ENCODE measurements at regions of chr3 and their contacts with region 1.

Region 1: GRCh38 chr3:186783073-186783730 is at the start of gene EIF4A2:
- DNase-seq: peak; percentile 72 to 91 (median 87)
- H3K4me3 ChIP-seq: peak within 1 kb of the TSS; percentile 61 to 100 (median 95)
- H3K27ac ChIP-seq: peak within 1 kb of the TSS; percentile 94 to 100 (median 100)
- H3K27me3 ChIP-seq: no peaks in the 10 kb centered on the region
- CTCF ChIP-seq: peak in 21 of 56 donors; percentile 2 to 49 (median 22)
- total RNA-seq, gene EIF4A2: 281 to 995 (median 685) TPM

Region 2: DNA sequence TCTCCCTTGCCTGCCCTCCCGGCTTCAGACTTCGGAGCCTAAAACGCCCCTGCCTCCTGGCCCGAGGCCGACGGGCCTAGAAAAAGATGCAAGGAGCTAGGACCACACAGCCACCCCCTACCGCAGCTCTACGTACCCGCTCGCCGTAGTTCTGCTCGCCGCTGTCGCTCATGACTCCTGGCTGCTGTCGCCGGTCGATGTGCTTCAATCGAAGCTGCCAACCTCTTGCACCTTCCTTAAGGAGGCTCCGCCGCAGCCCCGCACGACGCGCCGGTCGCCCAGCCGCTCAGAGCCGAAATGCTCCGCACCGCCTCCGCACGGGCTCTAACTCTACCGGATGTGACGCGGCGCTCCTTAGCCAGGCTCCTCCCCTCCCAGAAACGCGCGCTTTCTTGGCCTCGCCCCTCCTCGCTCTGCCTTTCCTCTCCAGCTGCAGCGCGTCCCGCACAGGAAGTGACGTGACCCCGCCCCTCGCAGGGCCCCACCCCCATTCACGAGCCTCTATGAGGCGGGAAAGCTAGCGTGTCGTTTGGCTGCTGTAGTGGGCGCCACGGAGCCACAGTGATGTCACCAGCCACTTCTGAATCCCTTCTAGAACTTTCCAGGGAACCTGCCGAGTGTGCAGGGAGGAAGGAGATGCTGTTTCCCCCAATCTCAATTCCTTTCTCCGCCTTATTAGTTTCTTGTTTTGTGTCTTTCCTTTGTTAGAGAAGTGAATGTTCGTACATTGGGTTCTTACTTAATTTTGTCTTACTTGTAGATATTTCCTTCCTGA is 845.3 kb before region 1 on chr3 and contains the start of gene TRA2B:
- intact Hi-C with region 1: loop called in 1 of 2 experiments (anchors 10 kb)
- DNase-seq: peak; percentile 98 to 100 (median 99)
- H3K4me3 ChIP-seq: peak within 1 kb of the TSS; percentile 43 to 100 (median 97)
- H3K27ac ChIP-seq: peak within 1 kb of the TSS; percentile 86 to 100 (median 99)
- H3K27me3 ChIP-seq: no peaks in the 10 kb centered on the region
- CTCF ChIP-seq: peak in 52 of 56 donors; percentile 2 to 65 (median 44)
- total RNA-seq, gene TRA2B: 66.0 to 127 (median 89.1) TPM

Region 3: GRCh38 chr3:186476044-186476468 is 307.1 kb before region 1 on chr3:
- intact Hi-C with region 1: loop called in 1 of 2 experiments (anchors 5 kb)
- DNase-seq: peak; percentile 67 to 90 (median 82)
- H3K4me3 ChIP-seq: peak overlapping the region in 2 of 59 donors; percentile 5 to 29
- H3K27ac ChIP-seq: peak overlapping the region in 35 of 59 donors; percentile 3 to 92 (median 49)
- H3K27me3 ChIP-seq: no peaks in the 10 kb centered on the region
- CTCF ChIP-seq: peak in 10 of 56 donors; percentile 10 to 33 (median 20)

Region 4: GRCh38 chr3:186570096-186570940 is 212.9 kb before region 1 on chr3 and contains the start of gene DNAJB11:
- intact Hi-C with region 1: loop called (anchors 5 kb)
- DNase-seq: peak; percentile 99 to 100 (median 100)
- H3K4me3 ChIP-seq: peak within 1 kb of the TSS; percentile 52 to 99 (median 92)
- H3K27ac ChIP-seq: peak within 1 kb of the TSS in 56 of 59 donors; percentile 25 to 97 (median 78)
- H3K27me3 ChIP-seq: no peaks in the 10 kb centered on the region
- CTCF ChIP-seq: peak in 25 of 56 donors; percentile 7 to 55 (median 28)
- total RNA-seq, gene DNAJB11: 13.8 to 50.8 (median 25.0) TPM

Region 5: GRCh38 chr3:186617038-186617946 is 165.9 kb before region 1 on chr3:
- intact Hi-C with region 1: loop called (anchors 5 to 10 kb)
- DNase-seq: peak; percentile 73 to 91 (median 82)
- H3K4me3 ChIP-seq: peak overlapping the region; percentile 4 to 60 (median 46)
- H3K27ac ChIP-seq: peak overlapping the region in 37 of 59 donors; percentile 1 to 76 (median 42)
- H3K27me3 ChIP-seq: no peaks in the 10 kb centered on the region
- CTCF ChIP-seq: peak; percentile 64 to 96 (median 89)

Region 6: GRCh38 chr3:186826976-186827731 is 44.0 kb after region 1 on chr3:
- intact Hi-C with region 1: loop called in 1 of 2 experiments (anchors 5 kb)
- DNase-seq: peak; percentile 50 to 91 (median 72)
- H3K4me3 ChIP-seq: peak overlapping the region; percentile 41 to 92 (median 72)
- H3K27ac ChIP-seq: peak overlapping the region in 49 of 59 donors; percentile 19 to 87 (median 74)
- H3K27me3 ChIP-seq: peaks cover 0 to 22% (median 0%) of the 10 kb centered on the region in 45 donors
- CTCF ChIP-seq: peak in 28 of 56 donors; percentile 8 to 52 (median 30)

Region 7: DNA sequence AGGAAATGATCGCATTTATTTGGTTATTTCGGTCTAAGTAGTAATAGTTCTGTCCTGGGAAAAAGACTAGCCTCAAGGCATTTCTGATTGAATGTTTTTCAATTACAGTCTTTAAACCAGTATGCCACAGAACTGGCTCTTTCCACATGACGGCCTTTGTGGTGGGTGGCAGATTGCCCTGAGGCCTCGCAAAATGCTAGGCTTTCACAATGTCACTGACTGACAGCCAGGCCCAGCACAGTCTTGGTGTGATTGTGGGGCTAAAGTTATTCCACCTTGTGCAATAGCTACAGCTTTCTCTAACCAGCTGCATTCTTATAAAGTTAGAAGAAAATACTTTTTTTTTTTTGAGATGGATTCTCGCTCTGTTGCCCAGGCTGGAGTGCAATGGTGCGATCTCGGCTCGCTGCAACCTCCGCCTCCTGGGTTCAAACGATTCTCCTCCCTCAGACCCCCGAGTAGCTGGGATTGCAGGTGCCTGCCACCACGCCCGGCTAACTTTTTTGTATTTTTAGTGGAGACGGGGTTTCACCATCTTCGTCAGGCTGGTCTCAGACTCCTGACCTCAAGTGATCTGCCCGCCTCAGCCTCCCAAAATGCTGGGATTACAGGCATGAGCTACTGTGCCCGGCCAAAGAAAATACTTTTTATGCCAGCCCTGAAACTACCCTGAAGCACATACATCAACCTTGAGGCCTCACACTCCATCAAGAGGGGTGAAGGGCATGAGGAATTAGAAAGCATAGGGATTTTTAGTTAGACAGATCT is 56.9 kb after region 1 on chr3:
- intact Hi-C with region 1: no loop called
- DNase-seq: no peak
- H3K4me3 ChIP-seq: no peak overlapping the region
- H3K27ac ChIP-seq: no peak overlapping the region
- H3K27me3 ChIP-seq: peaks cover 0 to 6% (median 0%) of the 10 kb centered on the region in 45 donors
- CTCF ChIP-seq: no peak

Measured in dorsolateral prefrontal cortex (tissue), 120 donors.